Activated CD4-positive, alpha-beta memory T cell treated with anti-CD3 and anti-CD28 coated beads, Interleukin-2, amount 10 ng/mL, durations not matched to agents 7 days and 5 days (primary cell): ENCODE measurements at regions of chr11 and their contacts with region 1.

Region 1: DNA sequence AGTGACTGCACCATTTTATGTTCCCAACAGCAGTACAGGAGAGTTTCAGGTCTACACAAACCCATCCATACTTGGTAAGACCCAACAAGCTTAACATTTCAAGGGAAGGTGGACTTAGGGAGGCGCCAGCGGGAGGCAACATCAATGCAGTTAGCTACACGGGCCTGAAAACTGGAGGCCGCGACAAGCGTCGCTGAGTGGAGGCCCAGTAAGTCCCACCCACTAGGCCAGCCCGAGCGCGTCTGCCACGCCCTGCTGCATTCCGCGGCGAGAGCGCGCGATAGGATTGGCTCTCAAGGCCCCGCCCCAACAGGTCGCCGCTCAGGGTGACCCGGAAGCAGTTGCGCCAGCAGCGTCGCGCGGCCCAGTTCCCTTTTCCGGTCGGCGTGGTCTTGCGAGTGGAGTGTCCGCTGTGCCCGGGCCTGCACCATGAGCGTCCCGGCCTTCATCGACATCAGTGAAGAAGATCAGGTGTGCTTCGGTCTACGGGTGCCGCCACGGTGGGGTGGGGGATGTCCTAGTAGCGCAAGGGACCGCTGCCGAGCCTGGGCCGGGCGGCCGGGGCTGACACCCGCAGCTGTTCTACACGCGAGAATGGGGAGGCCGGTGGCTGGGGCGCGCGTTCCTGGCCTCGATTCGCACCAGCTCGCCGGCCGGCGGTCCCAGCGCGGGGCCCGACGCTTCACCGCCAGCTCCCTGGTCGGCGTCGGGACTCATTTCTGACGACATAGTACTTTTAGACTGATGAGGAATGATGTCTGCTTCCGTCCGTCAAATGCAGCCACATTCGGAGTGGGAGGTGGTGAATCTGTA is at the start of gene EIF3M:
- DNase-seq: peak; percentile 96
- H3K4me3 Mint-ChIP-seq: peak within 1 kb of the TSS; percentile 90
- H3K27ac Mint-ChIP-seq: peak within 1 kb of the TSS; percentile 97
- H3K4me1 Mint-ChIP-seq: peaks cover 45% of the 10 kb centered on the region
- H3K27me3 Mint-ChIP-seq: no peaks in the 10 kb centered on the region
- total RNA-seq, gene EIF3M: 246 to 249 TPM

Region 2: GRCh38 chr11:32594272-32594671 is 10.6 kb after region 1 on chr11:
- CTCF ChIA-PET with region 1: interaction called, 6 read pairs
- POLR2A ChIA-PET with region 1: interaction called, 16 read pairs
- DNase-seq: no peak
- H3K4me3 Mint-ChIP-seq: no peak overlapping the region
- H3K27ac Mint-ChIP-seq: no peak overlapping the region
- H3K4me1 Mint-ChIP-seq: peaks cover 38% of the 10 kb centered on the region
- H3K27me3 Mint-ChIP-seq: no peaks in the 10 kb centered on the region

Region 3: DNA sequence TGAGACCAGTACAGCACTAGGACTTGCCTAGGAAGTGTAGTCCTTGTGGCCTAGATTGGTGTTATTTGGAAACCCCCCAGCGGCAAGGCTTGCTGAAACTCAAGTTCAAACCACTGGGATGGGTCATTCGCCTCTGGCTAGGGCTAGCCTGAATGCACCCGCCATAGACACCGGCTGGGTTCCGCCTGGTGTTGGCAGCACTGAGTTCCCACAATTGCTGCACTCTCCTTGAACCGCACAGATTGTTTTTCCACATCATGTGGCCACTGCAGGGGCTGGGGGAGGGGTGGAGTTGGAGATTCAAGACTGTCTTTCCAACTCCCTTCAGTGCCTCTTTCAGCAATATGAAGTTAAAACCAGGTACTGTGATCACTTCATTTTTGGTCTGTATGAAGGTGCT is 167.7 kb after region 1 on chr11:
- CTCF ChIA-PET with region 1: no interaction called
- POLR2A ChIA-PET with region 1: no interaction called
- DNase-seq: no peak
- H3K4me3 Mint-ChIP-seq: no peak overlapping the region
- H3K27ac Mint-ChIP-seq: no peak overlapping the region
- H3K4me1 Mint-ChIP-seq: no peaks in the 10 kb centered on the region
- H3K27me3 Mint-ChIP-seq: peaks cover 5% of the 10 kb centered on the region

Region 4: GRCh38 chr11:32893343-32894148 is 309.9 kb after region 1 on chr11:
- CTCF ChIA-PET with region 1: no interaction called
- POLR2A ChIA-PET with region 1: interaction called, 10 read pairs
- DNase-seq: peak; percentile 46
- H3K4me3 Mint-ChIP-seq: peak overlapping the region; percentile 96
- H3K27ac Mint-ChIP-seq: peak overlapping the region; percentile 78
- H3K4me1 Mint-ChIP-seq: peaks cover 36% of the 10 kb centered on the region
- H3K27me3 Mint-ChIP-seq: peaks cover 11% of the 10 kb centered on the region